ENCODE measurements at regions of chr20 and their contacts with region 1.

Region 1: GRCh38 chr20:62025832-62026563 is 39.7 kb downstream of the TAF4 start:
- DNase-seq: peak; percentile 34
- H3K4me3 Mint-ChIP-seq: no peak overlapping the region
- H3K27ac Mint-ChIP-seq: no peak overlapping the region
- H3K4me1 Mint-ChIP-seq: peaks cover 58% of the 10 kb centered on the region
- H3K27me3 Mint-ChIP-seq: no peaks in the 10 kb centered on the region

Region 2: DNA sequence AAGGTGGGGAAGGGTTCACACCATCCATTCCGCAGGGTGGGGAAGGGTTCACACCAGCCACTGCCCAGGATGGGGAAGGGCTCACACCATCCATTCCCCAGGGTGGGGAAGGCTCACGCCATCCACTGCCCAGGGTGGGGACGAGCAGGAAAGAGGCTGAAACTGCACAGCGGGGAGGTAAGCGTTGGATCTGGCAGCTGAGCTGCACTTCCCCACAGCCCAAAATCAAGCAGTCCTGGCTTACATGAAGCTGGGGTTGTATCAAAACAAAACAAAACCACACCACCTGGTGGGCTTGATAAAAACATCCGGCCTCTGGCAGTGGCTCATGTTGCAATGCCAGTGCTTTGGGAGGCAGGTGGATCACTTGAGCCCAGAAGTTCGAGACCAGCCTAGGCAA is 228.8 kb before region 1 on chr20:
- CTCF ChIA-PET with region 1: no interaction called
- intact Hi-C with region 1: no loop called
- DNase-seq: no peak
- H3K4me3 Mint-ChIP-seq: no peak overlapping the region
- H3K27ac Mint-ChIP-seq: no peak overlapping the region
- H3K4me1 Mint-ChIP-seq: no peaks in the 10 kb centered on the region
- H3K27me3 Mint-ChIP-seq: peaks cover 2% of the 10 kb centered on the region

Region 3: DNA sequence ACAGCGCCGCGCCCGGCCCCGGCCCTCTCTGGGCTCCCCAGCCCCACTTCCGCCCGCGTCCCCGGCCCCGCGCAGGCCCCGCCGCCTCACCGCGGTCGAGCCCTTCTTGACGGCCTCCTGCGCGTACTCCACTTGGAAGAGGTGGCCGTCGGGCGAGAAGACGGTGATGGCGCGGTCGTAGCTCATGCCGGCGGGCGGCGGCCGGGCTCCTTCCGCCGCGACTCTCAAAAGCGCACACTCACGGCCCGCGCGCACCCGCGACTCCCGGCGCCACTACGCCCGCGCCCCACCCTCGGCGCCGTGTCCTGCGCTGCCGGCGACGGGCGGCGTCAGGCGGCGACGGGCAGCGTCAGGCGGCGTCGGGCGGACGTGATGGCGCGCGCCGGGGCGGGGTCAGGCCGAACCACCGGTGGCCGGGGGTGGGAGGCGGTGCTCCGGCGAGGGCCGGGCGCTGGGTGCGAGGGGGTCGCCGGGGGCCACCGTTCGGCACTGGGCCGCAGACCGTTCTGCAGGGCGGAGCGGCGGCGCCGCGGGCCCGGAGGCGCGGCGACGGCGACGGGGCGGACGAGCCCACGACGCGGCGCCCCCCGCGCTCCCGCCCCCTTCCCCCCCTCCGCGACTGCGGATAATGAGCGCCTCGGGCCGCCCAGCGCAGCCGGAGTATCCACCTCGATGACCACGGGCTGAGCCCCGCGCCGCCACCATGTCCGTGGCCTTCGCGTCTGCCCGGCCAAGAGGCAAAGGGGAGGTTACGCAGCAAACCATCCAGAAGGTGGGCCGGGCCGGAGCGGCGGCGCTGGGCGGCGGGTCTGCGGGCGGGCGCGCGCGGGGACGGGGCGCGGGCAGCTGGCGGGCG is 117.3 kb after region 1 on chr20 and contains the starts of genes PSMA7 and SS18L1:
- CTCF ChIA-PET with region 1: interaction called, 7 read pairs
- intact Hi-C with region 1: loop called (anchors 1 kb)
- DNase-seq: peak; percentile 82
- H3K4me3 Mint-ChIP-seq: peak within 1 kb of the TSS; percentile 83
- H3K27ac Mint-ChIP-seq: peak within 1 kb of the TSS; percentile 87
- H3K4me1 Mint-ChIP-seq: peaks cover 55% of the 10 kb centered on the region
- H3K27me3 Mint-ChIP-seq: no peaks in the 10 kb centered on the region
- total RNA-seq, gene PSMA7: 287 to 288 TPM
- total RNA-seq, gene SS18L1: 14.5 to 18.0 TPM

Measured in activated naive CD4-positive, alpha-beta T cell treated with anti-CD3 and anti-CD28 coated beads for 36 hours (primary cell).